ENCODE measurements at regions of chr13 and their contacts with region 1.

Region 1: DNA sequence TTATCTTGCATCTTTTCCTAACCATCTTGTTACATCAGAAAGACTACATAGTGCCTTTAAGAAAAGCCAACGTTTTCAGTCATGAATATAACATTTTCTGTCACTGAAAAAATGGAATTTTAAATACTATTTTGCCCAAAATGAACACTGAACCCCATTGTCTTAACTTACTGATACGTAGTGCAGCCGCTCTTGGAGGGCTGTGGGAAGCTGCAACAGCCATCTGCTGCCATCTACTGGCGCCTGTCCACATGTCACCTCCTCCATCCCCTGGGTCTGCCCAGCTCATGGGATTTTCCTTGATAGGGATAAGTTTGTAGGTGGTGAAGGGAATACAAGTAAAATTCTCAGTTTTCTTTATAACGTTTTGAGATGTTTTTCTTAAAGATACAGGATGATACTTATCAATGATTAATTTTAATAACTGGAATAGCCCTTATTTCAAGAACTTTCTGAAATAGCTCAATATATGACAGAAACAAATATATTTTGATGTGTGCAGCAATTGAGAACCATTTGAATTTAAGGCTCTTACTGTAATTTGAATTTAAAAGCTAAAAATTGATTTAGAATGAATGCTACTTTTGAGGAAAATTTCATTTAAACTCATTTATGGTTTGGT is 73.7 kb downstream of the GGACT start:
- DNase-seq: peak; percentile 74 to 76
- ATAC-seq: peak; percentile 87 to 96 (median 91)
- H3K4me3 ChIP-seq: no peak overlapping the region
- H3K27ac ChIP-seq: no peak overlapping the region
- H3K4me1 ChIP-seq: peaks cover 0 to 25% (median 7%) of the 10 kb centered on the region in 9 donors
- H3K27me3 ChIP-seq: no peaks in the 10 kb centered on the region
- CTCF ChIP-seq: peak; percentile 86 to 99 (median 96)

Region 2: GRCh38 chr13:99671746-99672145 is 843.2 kb before region 1 on chr13:
- intact Hi-C with region 1: loop called in 1 of 10 experiments (anchors 5 kb)
- DNase-seq: no peak
- ATAC-seq: no peak
- H3K4me3 ChIP-seq: no peak overlapping the region
- H3K27ac ChIP-seq: no peak overlapping the region
- H3K4me1 ChIP-seq: peaks cover 0 to under 1% (median under 1%) of the 10 kb centered on the region in 9 donors
- H3K27me3 ChIP-seq: no peaks in the 10 kb centered on the region
- CTCF ChIP-seq: no peak

Region 3: GRCh38 chr13:99900960-99901359 is 613.9 kb before region 1 on chr13:
- intact Hi-C with region 1: loop called in 1 of 10 experiments (anchors 5 kb)
- DNase-seq: no peak
- ATAC-seq: no peak
- H3K4me3 ChIP-seq: no peak overlapping the region
- H3K27ac ChIP-seq: no peak overlapping the region
- H3K4me1 ChIP-seq: no peaks in the 10 kb centered on the region
- H3K27me3 ChIP-seq: peaks cover 4 to 98% (median 77%) of the 10 kb centered on the region in 7 donors
- CTCF ChIP-seq: no peak

Region 4: GRCh38 chr13:99916366-99917103 is 598.4 kb before region 1 on chr13:
- intact Hi-C with region 1: loop called in 9 of 10 experiments (anchors 1 to 10 kb)
- DNase-seq: peak in 1 of 2 donors; percentile 19
- ATAC-seq: peak in 7 of 8 donors; percentile 51 to 70 (median 66)
- H3K4me3 ChIP-seq: no peak overlapping the region
- H3K27ac ChIP-seq: no peak overlapping the region
- H3K4me1 ChIP-seq: no peaks in the 10 kb centered on the region
- H3K27me3 ChIP-seq: peaks cover 0 to 52% (median 31%) of the 10 kb centered on the region in 7 donors
- CTCF ChIP-seq: peak; percentile 52 to 93 (median 82)

Region 5: GRCh38 chr13:100235311-100235901 is 279.5 kb before region 1 on chr13:
- intact Hi-C with region 1: loop called in 6 of 10 experiments (anchors 10 kb)
- DNase-seq: peak in 1 of 2 donors; percentile 31
- ATAC-seq: peak in 1 of 8 donors; percentile 41
- H3K4me3 ChIP-seq: no peak overlapping the region
- H3K27ac ChIP-seq: no peak overlapping the region
- H3K4me1 ChIP-seq: peaks cover 0 to 33% (median 26%) of the 10 kb centered on the region in 9 donors
- H3K27me3 ChIP-seq: no peaks in the 10 kb centered on the region
- CTCF ChIP-seq: peak; percentile 15 to 76 (median 66)

Region 6: DNA sequence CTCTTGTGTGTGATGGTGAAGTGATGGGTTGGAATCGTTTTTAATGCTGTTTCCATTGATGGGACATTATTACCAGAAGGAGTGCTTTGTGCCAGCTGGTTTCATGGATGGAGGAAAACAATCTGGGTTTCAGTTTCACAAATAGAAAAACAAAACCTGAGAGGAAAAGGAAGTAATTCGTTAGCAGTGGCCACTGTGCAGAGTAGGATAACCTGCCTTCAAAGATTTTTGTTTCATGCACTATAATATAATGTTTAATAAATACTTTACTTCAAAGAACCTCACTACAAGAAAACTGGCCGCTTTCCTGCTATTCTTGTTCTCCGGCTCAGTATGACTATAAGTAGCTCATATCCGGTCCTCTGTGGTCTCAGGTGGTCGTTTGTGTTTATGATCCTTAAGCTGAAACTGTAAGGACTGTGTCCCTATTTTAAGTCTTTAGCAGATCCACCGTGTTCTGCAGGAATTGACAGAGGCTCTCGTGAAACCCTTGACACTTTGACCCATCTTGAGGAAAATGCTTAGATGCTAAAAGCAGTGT is 31.0 kb before region 1 on chr13:
- intact Hi-C with region 1: no loop called
- DNase-seq: no peak
- ATAC-seq: no peak
- H3K4me3 ChIP-seq: no peak overlapping the region
- H3K27ac ChIP-seq: no peak overlapping the region
- H3K4me1 ChIP-seq: peaks cover 0 to 22% (median 8%) of the 10 kb centered on the region in 9 donors
- H3K27me3 ChIP-seq: no peaks in the 10 kb centered on the region
- CTCF ChIP-seq: no peak

Region 7: DNA sequence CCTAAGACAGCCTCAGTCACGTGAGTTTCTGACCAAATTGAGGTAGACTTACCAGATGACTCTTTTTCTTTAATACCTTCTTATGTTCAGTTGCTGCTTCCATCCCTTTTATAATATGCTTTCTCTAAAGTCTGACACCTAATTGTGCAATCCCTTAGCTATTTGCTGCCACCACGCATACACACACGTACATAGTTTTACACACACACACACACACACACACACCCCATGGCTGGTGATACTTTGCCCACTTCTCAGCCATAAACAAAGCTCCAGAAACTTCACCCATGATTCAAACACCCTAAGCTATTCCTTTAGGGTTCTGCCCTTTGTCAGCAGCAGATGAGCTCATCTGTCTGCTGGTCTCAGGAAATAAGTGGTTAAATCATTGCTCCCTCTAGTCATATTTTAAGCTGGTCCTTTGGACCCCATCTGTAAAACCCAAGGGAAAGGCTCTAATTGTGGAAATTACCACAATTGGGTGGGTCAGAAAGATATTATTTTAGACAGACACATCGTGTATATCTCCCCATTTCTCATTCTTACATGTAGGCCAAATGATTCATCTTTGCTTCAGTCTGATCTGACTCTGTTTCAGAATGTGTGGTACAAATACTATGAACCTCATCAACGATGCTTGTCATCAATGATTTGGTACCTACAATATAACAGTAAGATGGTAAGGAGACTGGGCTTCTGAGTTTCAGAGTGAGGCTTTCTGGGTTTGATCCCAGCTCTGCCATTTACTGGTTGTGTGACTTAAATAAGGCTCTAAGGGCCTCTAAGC is 832.2 kb after region 1 on chr13:
- intact Hi-C with region 1: no loop called
- DNase-seq: no peak
- ATAC-seq: no peak
- H3K4me3 ChIP-seq: no peak overlapping the region
- H3K27ac ChIP-seq: no peak overlapping the region
- H3K4me1 ChIP-seq: no peaks in the 10 kb centered on the region
- H3K27me3 ChIP-seq: no peaks in the 10 kb centered on the region
- CTCF ChIP-seq: no peak

Measured in heart right ventricle (tissue), 16 donors.